HEK293T (cell line): ENCODE measurements at regions of chr22 and their contacts with region 1.

Region 1: GRCh38 chr22:22182218-22182989 is 62.2 kb upstream of the VPREB1 start:
- DNase-seq: no peak

Region 2: GRCh38 chr22:22195265-22196017 is 13.0 kb after region 1 on chr22:
- CTCF ChIA-PET with region 1: interaction called, 34 read pairs
- POLR2A ChIA-PET with region 1: no interaction called
- DNase-seq: peak; percentile 90

Region 3: DNA sequence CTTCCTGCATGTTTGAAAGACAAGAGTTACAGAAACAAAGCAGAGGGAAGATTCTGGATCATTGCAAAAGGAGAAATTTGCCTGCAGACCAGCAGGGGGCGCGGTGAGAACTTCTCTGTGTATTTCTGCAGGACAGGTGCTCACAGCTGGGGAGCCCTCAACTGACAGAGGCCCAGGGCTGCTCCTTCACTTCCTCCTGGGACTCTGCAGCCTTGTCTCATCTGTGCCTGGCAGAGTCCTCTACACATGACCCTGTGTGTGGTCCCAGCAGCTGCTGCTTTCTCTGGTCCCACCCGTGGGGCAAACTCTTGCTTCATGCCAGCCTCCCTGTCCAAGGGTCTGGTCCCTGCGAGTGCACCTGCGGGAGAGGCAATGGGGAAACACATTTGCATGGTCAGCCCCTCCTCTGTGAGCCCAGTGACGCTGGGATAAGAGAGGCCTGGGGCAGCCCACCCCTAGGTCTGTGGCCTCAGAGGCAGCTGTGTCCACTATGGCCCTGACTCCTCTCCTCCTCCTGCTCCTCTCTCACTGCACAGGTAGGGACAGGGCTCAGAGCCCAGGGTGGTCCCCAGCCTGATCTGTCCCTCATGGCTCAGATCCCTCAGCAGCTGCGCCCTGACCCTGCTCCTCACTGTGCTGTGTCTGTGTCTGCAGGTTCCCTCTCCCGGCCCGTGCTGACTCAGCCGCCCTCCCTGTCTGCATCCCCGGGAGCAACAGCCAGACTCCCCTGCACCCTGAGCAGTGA is 19.0 kb after region 1 on chr22:
- CTCF ChIA-PET with region 1: interaction called, 34 read pairs
- POLR2A ChIA-PET with region 1: no interaction called
- DNase-seq: peak; percentile 71